PC-9 (cell line): ENCODE measurements at regions of chr2 and their contacts with region 1.

Region 1: DNA sequence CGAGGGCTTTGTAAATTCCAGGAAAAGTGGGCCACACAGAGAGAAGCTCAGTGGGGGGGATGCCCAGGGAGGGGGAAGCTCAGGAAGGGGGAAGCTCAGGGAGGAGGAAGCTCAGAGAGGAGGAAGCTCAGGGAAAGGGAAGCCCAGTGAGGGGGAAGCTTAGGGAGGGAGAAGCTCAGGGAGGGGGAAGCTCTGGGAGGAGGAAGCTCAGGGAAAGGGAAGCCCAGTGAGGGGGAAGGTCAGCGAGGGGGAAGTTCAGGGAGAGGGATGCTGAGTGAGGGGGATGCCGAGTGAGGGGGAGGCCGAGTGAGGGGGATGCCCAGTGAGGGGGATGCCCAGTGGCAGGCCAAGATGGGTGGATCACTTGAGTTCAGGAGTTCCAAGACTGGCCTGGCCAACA is 821 bp upstream of the CHRNG start:
- DNase-seq: no peak
- H3K4me3 ChIP-seq: no peak overlapping the region
- H3K27ac ChIP-seq: no peak overlapping the region
- H3K4me1 ChIP-seq: no peaks in the 10 kb centered on the region
- H3K27me3 ChIP-seq: no peaks in the 10 kb centered on the region
- CTCF ChIP-seq: no peak

Region 2: GRCh38 chr2:232342635-232343565 is 195.8 kb before region 1 on chr2:
- CTCF ChIA-PET with region 1: no interaction called
- POLR2A ChIA-PET with region 1: interaction called, 15 read pairs
- intact Hi-C with region 1: no loop called
- DNase-seq: no peak
- H3K4me3 ChIP-seq: no peak overlapping the region
- H3K27ac ChIP-seq: no peak overlapping the region
- H3K4me1 ChIP-seq: no peaks in the 10 kb centered on the region
- H3K27me3 ChIP-seq: no peaks in the 10 kb centered on the region
- CTCF ChIP-seq: no peak

Region 3: GRCh38 chr2:232623783-232624727 is 85.4 kb after region 1 on chr2:
- CTCF ChIA-PET with region 1: no interaction called
- POLR2A ChIA-PET with region 1: interaction called, 11 read pairs
- intact Hi-C with region 1: no loop called
- DNase-seq: peak; percentile 36 to 87
- H3K4me3 ChIP-seq: no peak overlapping the region; the same call in 1 of the 2 replicates
- H3K27ac ChIP-seq: peak overlapping the region; percentile 36
- H3K4me1 ChIP-seq: peaks cover 18% of the 10 kb centered on the region
- H3K27me3 ChIP-seq: no peaks in the 10 kb centered on the region
- CTCF ChIP-seq: no peak